ENCODE measurements at regions of chr4 and their contacts with region 1.

Region 1: GRCh38 chr4:113684534-113685091 is 76.9 kb downstream of the CAMK2D start:
- DNase-seq: no peak
- H3K4me3 Mint-ChIP-seq: peak overlapping the region; percentile 11
- H3K27ac Mint-ChIP-seq: peak overlapping the region; percentile 85
- H3K4me1 Mint-ChIP-seq: peaks cover 57% of the 10 kb centered on the region
- H3K27me3 Mint-ChIP-seq: no peaks in the 10 kb centered on the region

Region 2: GRCh38 chr4:113355550-113356371 is 328.9 kb before region 1 on chr4:
- intact Hi-C with region 1: loop called (anchors 1 kb)
- DNase-seq: peak; percentile 79
- H3K4me3 Mint-ChIP-seq: peak overlapping the region; percentile 60
- H3K27ac Mint-ChIP-seq: peak overlapping the region; percentile 89
- H3K4me1 Mint-ChIP-seq: peaks cover 42% of the 10 kb centered on the region
- H3K27me3 Mint-ChIP-seq: peaks cover 54% of the 10 kb centered on the region

Region 3: DNA sequence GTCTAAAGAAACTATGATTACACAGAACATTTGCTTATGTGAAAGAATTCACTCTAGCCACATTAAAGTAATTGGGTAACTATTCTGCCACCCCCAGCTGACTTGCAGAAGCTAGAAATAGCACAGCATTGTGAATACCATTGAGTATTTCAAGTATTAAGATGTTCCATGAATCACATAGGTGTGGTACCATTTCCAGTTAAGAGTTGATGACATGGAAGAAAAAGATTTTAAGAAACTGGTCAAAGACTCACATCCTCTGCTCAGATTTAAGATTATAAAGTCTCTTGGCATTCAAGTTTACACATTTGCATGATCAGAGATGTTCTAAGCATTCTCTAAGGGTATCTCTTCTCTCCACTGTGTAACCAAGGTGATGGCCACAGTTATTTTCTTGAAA is 210.6 kb before region 1 on chr4:
- intact Hi-C with region 1: loop called (anchors 1 kb)
- DNase-seq: no peak
- H3K4me3 Mint-ChIP-seq: no peak overlapping the region
- H3K27ac Mint-ChIP-seq: peak overlapping the region; percentile 7
- H3K4me1 Mint-ChIP-seq: peaks cover 28% of the 10 kb centered on the region
- H3K27me3 Mint-ChIP-seq: no peaks in the 10 kb centered on the region

Region 4: DNA sequence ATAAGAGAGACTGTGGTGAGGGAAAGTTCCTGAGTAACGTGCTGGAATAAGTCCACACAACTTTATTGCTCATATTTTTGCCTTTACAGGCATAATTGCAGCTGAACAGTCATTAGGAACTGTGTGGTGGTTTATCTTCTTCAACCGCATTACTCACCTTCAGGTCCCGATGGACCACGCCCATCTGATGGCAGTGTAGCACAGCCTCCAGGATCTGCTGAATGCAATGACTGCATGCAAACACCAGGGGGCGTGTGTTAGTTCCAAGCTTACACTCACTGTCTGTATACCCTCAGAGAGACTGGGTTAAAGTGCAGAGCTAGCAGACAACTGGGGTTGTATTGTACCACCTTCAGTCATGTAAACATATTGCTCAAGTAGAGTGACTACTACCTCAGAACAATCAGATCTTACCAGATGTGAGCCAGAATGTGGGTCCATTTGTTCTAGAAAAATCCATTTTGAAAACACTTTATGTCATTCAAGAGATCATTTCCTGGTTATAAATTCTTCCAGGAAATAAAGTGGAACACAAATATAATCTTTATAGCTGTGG is 137.0 kb before region 1 on chr4:
- intact Hi-C with region 1: loop called (anchors 1 kb)
- DNase-seq: peak; percentile 90
- H3K4me3 Mint-ChIP-seq: no peak overlapping the region
- H3K27ac Mint-ChIP-seq: peak overlapping the region; percentile 3
- H3K4me1 Mint-ChIP-seq: peaks cover 30% of the 10 kb centered on the region
- H3K27me3 Mint-ChIP-seq: no peaks in the 10 kb centered on the region

Region 5: GRCh38 chr4:113636438-113636818 is 48.2 kb before region 1 on chr4:
- intact Hi-C with region 1: loop called (anchors 1 kb)
- DNase-seq: no peak
- H3K4me3 Mint-ChIP-seq: peak overlapping the region; percentile 45
- H3K27ac Mint-ChIP-seq: peak overlapping the region; percentile 63
- H3K4me1 Mint-ChIP-seq: peaks cover 47% of the 10 kb centered on the region
- H3K27me3 Mint-ChIP-seq: no peaks in the 10 kb centered on the region

Region 6: GRCh38 chr4:113695328-113696169 is 10.9 kb after region 1 on chr4:
- intact Hi-C with region 1: loop called (anchors 1 kb)
- DNase-seq: no peak
- H3K4me3 Mint-ChIP-seq: no peak overlapping the region
- H3K27ac Mint-ChIP-seq: no peak overlapping the region
- H3K4me1 Mint-ChIP-seq: peaks cover 40% of the 10 kb centered on the region
- H3K27me3 Mint-ChIP-seq: no peaks in the 10 kb centered on the region

Region 7: DNA sequence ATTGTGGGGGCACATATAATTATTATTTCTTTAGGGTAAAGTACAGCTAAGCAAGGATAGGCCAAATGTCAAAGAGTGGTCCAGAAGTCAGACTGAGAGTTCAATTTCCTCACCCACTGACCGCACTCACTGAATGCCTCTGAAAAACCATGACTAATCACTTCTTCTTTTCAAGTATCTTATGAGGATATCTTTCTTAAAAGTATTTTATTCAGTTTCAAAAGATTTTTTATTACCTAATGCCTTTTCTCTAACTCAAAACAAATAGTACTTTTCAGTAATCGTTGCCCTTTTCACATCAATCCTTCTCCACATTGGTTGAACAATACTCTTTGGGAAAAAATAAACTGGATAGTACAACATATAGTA is 138.7 kb after region 1 on chr4:
- intact Hi-C with region 1: loop called (anchors 2 kb)
- DNase-seq: no peak
- H3K4me3 Mint-ChIP-seq: no peak overlapping the region
- H3K27ac Mint-ChIP-seq: no peak overlapping the region
- H3K4me1 Mint-ChIP-seq: peaks cover 42% of the 10 kb centered on the region
- H3K27me3 Mint-ChIP-seq: peaks cover 6% of the 10 kb centered on the region

Measured in activated T-helper 2 cell treated with anti-CD3 and anti-CD28 coated beads, Interferon-gamma antibody, Interleukin-2, Interleukin-4, amounts not matched to agents 10 μg/mL and 5 μg/mL and 100 μg/mL, durations not matched to agents 14 hours and 24 hours and 36 hours (primary cell).